Astrocyte of the cerebellum (primary cell): ENCODE measurements at regions of chr9 and their contacts with region 1.

Region 1: GRCh38 chr9:81874931-81875330 is 53.3 kb upstream of the SPATA31D4 start:
- DNase-seq: peak; percentile 37
- H3K4me3 ChIP-seq: no peak overlapping the region
- CTCF ChIP-seq: no peak

Region 2: DNA sequence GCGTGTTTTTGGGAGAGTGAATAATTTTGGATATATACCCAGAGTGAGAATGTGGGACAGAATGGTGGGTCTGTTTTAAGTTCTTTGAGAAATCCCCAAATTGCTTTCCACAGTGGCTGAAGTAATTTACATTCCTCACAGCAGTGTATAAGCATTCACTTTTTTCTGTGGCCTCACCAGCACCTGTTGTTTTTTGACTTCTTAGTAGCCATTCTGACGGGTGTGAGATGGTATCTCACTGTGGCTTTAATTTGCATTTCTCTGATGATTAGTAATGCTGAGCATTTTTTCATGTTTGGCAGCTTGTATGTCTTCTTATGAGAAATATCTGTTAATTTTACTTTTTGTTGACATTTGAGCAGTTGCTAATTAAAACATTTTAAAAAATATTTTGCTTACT is 104.3 kb after region 1 on chr9:
- in situ Hi-C with region 1: loop called (anchors 25 kb)
- DNase-seq: peak; percentile 6
- H3K4me3 ChIP-seq: no peak overlapping the region
- CTCF ChIP-seq: no peak